ENCODE measurements at regions of chr22 and their contacts with region 1.

Region 1: DNA sequence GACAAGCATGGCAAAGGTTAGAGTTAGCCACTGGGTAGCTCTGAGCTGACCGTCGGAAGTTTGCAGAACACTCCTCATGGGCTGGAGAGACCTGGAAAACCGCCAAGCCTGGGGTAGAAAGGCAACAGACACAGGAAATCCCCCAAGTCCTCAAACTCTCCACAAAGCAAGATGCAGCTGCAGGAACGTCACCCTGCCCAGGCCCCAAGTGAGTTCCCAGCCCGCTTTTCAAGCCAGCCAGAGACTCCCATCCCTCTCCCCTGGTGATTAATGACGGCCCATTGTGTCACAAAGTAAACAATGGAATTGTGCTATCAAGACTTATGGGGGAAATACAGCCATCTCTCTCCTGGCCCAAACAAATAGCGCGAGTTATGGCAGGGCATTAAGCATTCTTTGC is 633.0 kb downstream of the TBC1D22A start:
- DNase-seq: peak; percentile 2
- ATAC-seq: peak; percentile 48; the same call in 1 of the 2 replicates
- H3K4me3 ChIP-seq: no peak overlapping the region
- H3K27ac ChIP-seq: no peak overlapping the region
- H3K4me1 ChIP-seq: no peaks in the 10 kb centered on the region
- H3K27me3 ChIP-seq: no peaks in the 10 kb centered on the region
- CTCF ChIP-seq: no peak

Region 2: GRCh38 chr22:47318041-47318737 is 77.3 kb before region 1 on chr22:
- CTCF ChIA-PET with region 1: no interaction called
- POLR2A ChIA-PET with region 1: interaction called, 10 read pairs
- in situ Hi-C with region 1: no loop called
- intact Hi-C with region 1: no loop called
- DNase-seq: no peak
- ATAC-seq: no peak
- H3K4me3 ChIP-seq: no peak overlapping the region
- H3K27ac ChIP-seq: no peak overlapping the region
- H3K4me1 ChIP-seq: no peaks in the 10 kb centered on the region; the same call in 1 of the 2 replicates
- H3K27me3 ChIP-seq: no peaks in the 10 kb centered on the region
- CTCF ChIP-seq: no peak

Region 3: GRCh38 chr22:47533961-47534803 is 138.7 kb after region 1 on chr22:
- CTCF ChIA-PET with region 1: no interaction called
- POLR2A ChIA-PET with region 1: no interaction called
- in situ Hi-C with region 1: no loop called
- intact Hi-C with region 1: no loop called
- DNase-seq: no peak
- ATAC-seq: no peak
- H3K4me3 ChIP-seq: no peak overlapping the region
- H3K27ac ChIP-seq: no peak overlapping the region
- H3K4me1 ChIP-seq: no peaks in the 10 kb centered on the region
- H3K27me3 ChIP-seq: no peaks in the 10 kb centered on the region
- CTCF ChIP-seq: no peak

Region 4: GRCh38 chr22:47547881-47548650 is 152.6 kb after region 1 on chr22:
- CTCF ChIA-PET with region 1: no interaction called
- POLR2A ChIA-PET with region 1: no interaction called
- in situ Hi-C with region 1: no loop called
- intact Hi-C with region 1: no loop called
- DNase-seq: no peak
- ATAC-seq: no peak
- H3K4me3 ChIP-seq: no peak overlapping the region
- H3K27ac ChIP-seq: no peak overlapping the region
- H3K4me1 ChIP-seq: no peaks in the 10 kb centered on the region
- H3K27me3 ChIP-seq: no peaks in the 10 kb centered on the region
- CTCF ChIP-seq: no peak

Measured in Panc1 (cell line).